ENCODE measurements at regions of chr22 and their contacts with region 1.

Region 1: DNA sequence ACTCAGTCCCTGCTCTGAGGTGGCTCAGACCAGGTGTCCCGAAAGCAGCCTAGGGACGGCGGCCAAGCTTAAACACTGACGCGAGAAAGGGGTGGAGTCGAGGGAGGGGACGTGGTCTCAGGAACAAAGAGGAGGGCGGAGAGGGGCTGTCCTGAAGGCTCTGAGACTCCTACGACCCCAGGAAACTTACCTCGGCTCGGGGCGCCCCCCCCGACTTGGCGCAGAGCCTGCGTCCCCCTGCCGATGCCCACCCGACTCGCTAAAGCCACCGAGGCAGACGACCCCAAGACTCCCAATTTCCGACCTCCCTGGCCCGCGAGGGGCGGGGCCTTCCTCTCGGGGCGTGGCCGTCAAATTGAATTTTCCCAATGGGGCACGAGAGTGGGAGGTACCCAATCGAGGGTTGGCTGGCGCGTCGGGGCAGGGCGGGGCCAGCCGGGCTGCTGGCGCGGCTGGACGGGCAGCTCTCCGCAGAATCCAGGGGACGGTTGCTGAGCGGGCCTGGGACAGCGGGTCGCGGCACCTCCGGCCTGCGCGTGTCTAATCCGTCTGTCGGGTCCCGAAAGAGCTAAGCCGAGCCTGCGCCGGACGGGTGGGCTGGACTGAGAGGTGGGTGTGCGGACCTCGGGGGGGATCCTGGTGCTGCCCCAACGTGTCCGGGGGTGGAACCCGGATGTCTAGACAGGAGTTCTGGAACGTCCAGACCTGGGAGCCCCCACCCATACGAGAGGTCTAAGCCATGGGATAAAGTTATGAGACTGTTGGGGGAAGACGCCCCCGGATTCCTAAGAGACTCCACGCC is at the start of gene SMTN:
- DNase-seq: peak; percentile 80 to 82
- ATAC-seq: peak; percentile 80 to 86
- H3K4me3 ChIP-seq: peak within 1 kb of the TSS; percentile 95
- H3K27ac ChIP-seq: peak within 1 kb of the TSS; percentile 92 to 94
- H3K4me1 ChIP-seq: peaks cover 26% of the 10 kb centered on the region
- CTCF ChIP-seq: no peak
- EP300 ChIP-seq: no peak
- POLR2A ChIP-seq: peak; percentile 73; the same call in 1 of the 2 replicates
- RAD21 ChIP-seq: 0 out of 5 replicates have a peak, but pooled peaks of 1 of the 2 experiments have one; percentile 10
- polyA plus RNA-seq, gene SMTN: 7.0 and 12.7 TPM in 2 replicates

Region 2: GRCh38 chr22:30940685-30941362 is 140.2 kb before region 1 on chr22:
- CTCF ChIA-PET with region 1: interaction called, 32 read pairs
- POLR2A ChIA-PET with region 1: interaction called, 3 read pairs
- DNase-seq: no peak
- ATAC-seq: no peak
- H3K4me3 ChIP-seq: no peak overlapping the region
- H3K27ac ChIP-seq: no peak overlapping the region
- H3K4me1 ChIP-seq: no peaks in the 10 kb centered on the region
- CTCF ChIP-seq: no peak
- EP300 ChIP-seq: no peak
- POLR2A ChIP-seq: no peak
- RAD21 ChIP-seq: no peak

Region 3: DNA sequence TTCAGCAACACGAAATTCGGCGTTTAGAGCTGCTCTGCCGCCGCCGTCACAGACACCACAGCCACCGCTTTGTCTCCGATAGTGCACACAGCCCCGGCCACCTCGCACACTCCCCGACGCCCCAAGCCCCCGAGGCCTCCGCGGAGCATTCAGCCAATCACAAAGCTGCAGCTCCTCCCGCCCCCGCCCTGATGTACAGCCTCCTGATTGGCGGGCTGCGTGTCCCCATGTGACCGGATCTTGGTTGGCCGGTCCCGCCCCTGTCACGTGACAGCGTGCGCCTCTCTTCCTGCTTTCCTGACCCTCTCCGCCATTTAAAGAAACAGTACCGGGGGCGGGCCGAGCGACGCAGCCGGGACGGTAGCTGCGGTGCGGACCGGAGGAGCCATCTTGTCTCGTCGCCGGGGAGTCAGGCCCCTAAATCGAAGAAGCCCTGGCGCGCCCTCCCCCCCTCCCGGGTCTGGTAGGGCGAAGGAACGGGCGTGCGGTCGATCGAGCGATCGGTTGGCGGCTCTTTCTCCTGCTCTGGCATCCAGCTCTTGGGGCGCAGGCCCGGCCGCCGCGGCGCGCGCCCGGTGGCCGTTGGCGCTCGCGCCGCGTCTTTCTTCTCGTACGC is 112.0 kb before region 1 on chr22 and contains the start of gene TUG1:
- CTCF ChIA-PET with region 1: interaction called, 20 read pairs
- POLR2A ChIA-PET with region 1: interaction called, 58 read pairs
- DNase-seq: peak; percentile 95 to 99
- ATAC-seq: peak; percentile 95 to 96
- H3K4me3 ChIP-seq: peak within 1 kb of the TSS; percentile 90
- H3K27ac ChIP-seq: peak within 1 kb of the TSS; percentile 98 to 99
- H3K4me1 ChIP-seq: 0 out of 3 replicates have a peak, but pooled peaks cover 5% of the 10 kb centered on the region
- CTCF ChIP-seq: no peak
- EP300 ChIP-seq: no peak
- POLR2A ChIP-seq: peak; percentile 17; the same call in 1 of the 2 replicates
- RAD21 ChIP-seq: no peak
- polyA plus RNA-seq, gene TUG1: 104 and 120 TPM in 2 replicates

Region 4: DNA sequence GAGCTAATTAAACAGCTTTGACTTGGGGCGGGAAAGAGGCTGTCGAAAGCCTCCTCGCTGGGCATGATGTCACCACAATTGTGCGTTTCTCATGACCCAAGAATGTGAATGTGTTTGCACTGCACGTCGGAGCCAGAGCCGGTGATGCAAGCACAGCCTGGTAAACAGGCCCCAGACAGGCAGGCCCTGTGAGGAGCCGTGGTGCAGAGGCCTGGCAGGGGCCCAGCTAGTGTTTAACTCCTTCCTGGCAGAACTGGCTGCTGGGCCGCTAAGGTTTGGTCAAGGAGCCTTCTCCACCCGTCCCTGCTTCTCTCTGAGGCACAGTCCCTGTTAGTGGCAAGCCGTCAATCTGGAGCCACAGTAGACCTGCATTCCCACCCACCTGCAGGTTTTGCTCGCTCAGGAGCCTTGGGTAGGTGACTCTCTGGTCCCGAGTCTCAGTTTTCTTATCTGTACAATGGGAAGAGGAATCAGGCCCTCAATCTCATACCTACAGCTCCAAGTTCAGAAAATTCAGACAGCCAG is 25.4 kb before region 1 on chr22:
- CTCF ChIA-PET with region 1: interaction called, 34 read pairs
- POLR2A ChIA-PET with region 1: interaction called, 11 read pairs
- DNase-seq: peak; percentile 92 to 98
- ATAC-seq: peak; percentile 98 to 99
- H3K4me3 ChIP-seq: no peak overlapping the region
- H3K27ac ChIP-seq: peak overlapping the region; percentile 93 to 94
- H3K4me1 ChIP-seq: peaks cover 52% of the 10 kb centered on the region
- CTCF ChIP-seq: no peak
- EP300 ChIP-seq: peak; percentile 68 to 81; a peak in 3 of 5 replicates
- POLR2A ChIP-seq: no peak
- RAD21 ChIP-seq: peak; percentile 11 to 38; a peak in 3 of 5 replicates

Region 5: DNA sequence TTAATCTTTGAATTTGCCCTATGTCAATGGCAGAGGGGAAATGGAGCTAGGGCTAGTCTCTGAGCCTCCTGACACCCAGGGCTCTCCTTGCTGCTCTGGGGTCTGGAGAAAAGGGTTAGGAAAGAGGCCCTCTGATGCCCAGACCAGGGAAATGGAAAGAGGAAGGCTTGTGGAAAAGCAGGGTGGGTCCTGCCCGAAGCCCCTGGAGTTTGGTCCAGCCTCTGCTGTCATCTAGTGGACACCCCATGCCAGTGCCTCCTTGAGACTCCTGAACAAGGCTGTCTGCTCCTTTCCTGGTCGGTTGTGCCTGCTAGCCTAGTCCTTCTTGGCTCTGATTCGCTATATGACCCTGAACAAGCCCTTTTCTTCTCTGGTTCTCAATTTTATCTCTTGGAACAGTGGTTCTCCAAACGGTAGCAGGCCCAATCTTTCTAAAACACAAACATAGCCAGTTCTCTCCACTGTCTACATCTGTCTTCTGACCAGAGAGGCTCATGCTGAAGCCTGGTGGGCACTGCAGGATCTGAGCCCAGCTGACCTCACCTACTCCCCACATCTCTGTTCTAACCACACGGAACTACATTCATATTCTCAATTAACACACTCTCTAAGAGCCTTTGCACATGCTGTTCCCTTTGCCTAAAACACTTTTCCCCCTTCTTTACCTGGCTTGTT is 68.0 kb after region 1 on chr22:
- CTCF ChIA-PET with region 1: interaction called, 50 read pairs
- POLR2A ChIA-PET with region 1: no interaction called
- DNase-seq: peak; percentile 72 to 75
- ATAC-seq: peak; percentile 98 to 99
- H3K4me3 ChIP-seq: no peak overlapping the region
- H3K27ac ChIP-seq: 0 out of 6 replicates have a peak overlapping the region, but pooled peaks of 1 of the 2 experiments have one; percentile 0
- H3K4me1 ChIP-seq: no peaks in the 10 kb centered on the region
- CTCF ChIP-seq: peak; percentile 90
- EP300 ChIP-seq: no peak
- POLR2A ChIP-seq: no peak
- RAD21 ChIP-seq: peak; percentile 91 to 92

Region 6: GRCh38 chr22:31321421-31321820 is 240.4 kb after region 1 on chr22:
- CTCF ChIA-PET with region 1: no interaction called
- POLR2A ChIA-PET with region 1: no interaction called
- DNase-seq: no peak
- ATAC-seq: 0 out of 6 replicates have a peak, but pooled peaks of 1 of the 2 experiments have one; percentile 12
- H3K4me3 ChIP-seq: no peak overlapping the region
- H3K27ac ChIP-seq: no peak overlapping the region
- H3K4me1 ChIP-seq: no peaks in the 10 kb centered on the region
- CTCF ChIP-seq: no peak
- EP300 ChIP-seq: no peak
- POLR2A ChIP-seq: no peak
- RAD21 ChIP-seq: no peak

Measured in A549 (cell line).